Breast epithelium (tissue), 4 donors: ENCODE measurements at regions of chr3 and their contacts with region 1.

Region 1: DNA sequence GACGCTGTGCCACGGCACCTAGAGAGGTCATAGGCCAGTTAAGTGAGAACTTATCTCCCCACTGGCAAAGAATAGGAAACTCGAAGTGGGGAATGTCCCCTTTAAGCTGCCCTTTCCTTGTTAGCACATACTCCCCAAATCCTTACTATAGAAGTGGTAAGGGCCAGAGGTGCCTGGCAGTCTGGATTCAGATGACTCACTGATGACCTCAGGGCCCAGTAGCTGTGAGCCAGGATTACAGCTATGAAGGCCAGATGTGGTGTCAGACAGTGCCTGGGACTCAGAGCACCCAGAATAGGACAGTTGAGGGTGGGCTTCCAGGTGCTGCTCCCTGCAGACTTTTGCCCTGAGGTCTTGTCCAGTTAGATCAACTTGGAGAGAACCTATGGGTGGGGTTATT is 37.7 kb downstream of the PDIA5 start:
- DNase-seq: no peak
- H3K4me3 ChIP-seq: no peak overlapping the region
- H3K27ac ChIP-seq: no peak overlapping the region
- H3K4me1 ChIP-seq: no peaks in the 10 kb centered on the region
- H3K27me3 ChIP-seq: no peaks in the 10 kb centered on the region
- CTCF ChIP-seq: no peak
- POLR2A ChIP-seq: no peak

Region 2: DNA sequence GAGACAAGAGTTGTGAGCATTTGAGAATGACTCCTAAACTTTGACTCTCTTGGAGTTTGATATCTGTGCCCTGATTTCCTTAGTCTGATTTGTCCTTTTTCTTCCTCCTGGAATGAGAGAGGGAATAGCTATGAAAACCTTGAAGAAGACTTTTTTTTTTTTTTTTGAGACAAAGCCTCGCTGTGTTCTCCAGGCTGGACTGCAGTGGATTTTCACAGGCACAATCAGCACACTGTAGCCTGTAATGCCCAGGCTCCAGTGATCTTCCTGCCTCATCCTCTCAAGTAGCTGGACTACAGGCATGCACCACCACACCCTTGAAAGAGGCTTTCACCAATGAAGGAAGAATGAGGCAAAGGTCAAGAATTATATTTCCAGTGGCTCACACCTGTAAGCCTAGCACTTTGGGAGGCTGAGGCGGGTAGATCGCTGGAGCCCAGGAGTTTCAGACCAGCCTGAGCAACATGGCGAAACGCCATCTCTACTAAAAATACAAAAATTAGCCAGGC is 1547.1 kb before region 1 on chr3:
- intact Hi-C with region 1: loop called (anchors 5 kb)
- DNase-seq: no peak
- H3K4me3 ChIP-seq: no peak overlapping the region
- H3K27ac ChIP-seq: no peak overlapping the region
- H3K4me1 ChIP-seq: no peaks in the 10 kb centered on the region
- H3K27me3 ChIP-seq: no peaks in the 10 kb centered on the region
- CTCF ChIP-seq: no peak
- POLR2A ChIP-seq: no peak

Region 3: GRCh38 chr3:122183521-122183892 is 921.0 kb before region 1 on chr3 and contains the start of gene CASR:
- intact Hi-C with region 1: loop called (anchors 10 kb)
- DNase-seq: no peak
- H3K4me3 ChIP-seq: peak within 1 kb of the TSS in 2 of 3 donors; percentile 35 to 55
- H3K27ac ChIP-seq: no peak within 1 kb of the TSS
- H3K4me1 ChIP-seq: no peaks in the 10 kb centered on the region
- H3K27me3 ChIP-seq: peaks cover 0 to 19% of the 10 kb centered on the region in 2 donors
- CTCF ChIP-seq: no peak
- POLR2A ChIP-seq: no peak
- total RNA-seq, gene CASR: not detected

Region 4: DNA sequence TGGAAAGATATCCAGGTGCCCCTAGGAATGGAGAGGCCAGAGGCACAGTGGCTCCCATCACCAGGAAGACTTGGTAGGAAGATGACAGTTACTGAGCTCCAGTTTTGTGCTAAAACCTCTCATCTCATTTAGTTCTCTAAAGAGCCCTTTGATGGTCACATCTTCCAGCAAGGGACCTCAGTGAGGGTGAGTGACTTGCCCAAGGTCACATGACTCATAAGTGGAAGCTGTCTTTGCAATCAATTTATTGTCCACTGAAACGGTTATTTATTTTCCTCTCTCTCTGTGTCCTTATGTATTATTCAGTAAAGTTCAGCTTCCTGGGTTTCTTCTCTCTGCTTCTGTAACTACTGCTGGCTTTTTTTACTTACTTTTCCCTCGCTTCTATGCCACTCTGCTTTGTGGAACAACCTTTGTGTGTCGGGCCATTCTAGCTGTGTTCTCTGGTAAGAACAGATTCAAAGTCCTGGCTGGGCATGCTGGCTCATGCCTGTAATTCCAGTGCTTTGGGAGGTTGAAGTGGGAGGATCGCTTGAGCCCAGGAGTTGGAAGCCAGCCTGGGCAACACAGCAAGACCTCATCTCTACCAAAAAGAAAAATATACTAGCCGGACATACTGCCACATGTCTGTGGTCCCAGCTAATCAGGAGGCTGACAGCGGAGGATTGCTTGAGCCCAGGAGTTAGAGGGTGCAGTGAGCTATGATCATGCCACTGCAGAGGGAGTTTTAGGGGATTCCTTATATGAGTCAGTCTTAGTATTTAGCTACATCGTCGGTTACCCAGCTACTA is 18.2 kb after region 1 on chr3:
- intact Hi-C with region 1: no loop called
- DNase-seq: no peak
- H3K4me3 ChIP-seq: no peak overlapping the region
- H3K27ac ChIP-seq: no peak overlapping the region
- H3K4me1 ChIP-seq: no peaks in the 10 kb centered on the region
- H3K27me3 ChIP-seq: no peaks in the 10 kb centered on the region
- CTCF ChIP-seq: no peak
- POLR2A ChIP-seq: no peak